Transverse colon (tissue), 4 donors: ENCODE measurements at regions of chr9 and their contacts with region 1.

Region 1: DNA sequence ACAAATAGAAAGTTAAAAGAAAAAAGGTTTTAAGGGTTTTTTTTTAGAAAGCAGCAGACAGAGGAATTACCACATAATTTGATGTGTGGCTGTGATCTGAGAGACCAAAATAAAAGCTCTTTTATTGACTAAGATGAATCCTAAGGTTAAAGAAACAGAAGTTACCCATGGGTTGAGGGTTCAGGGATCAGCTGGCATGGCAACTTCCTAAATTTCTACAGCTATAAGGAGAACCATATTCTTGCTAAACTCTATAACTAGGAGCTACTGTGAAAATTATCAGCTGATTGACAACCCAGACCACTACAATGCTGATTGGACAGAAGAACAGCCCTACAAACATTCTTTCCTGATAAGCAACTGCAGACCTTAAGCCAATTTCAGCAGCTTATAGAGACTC is 40.2 kb downstream of the TMEM215 start:
- DNase-seq: no peak
- H3K4me3 ChIP-seq: no peak overlapping the region
- H3K27ac ChIP-seq: no peak overlapping the region
- H3K4me1 ChIP-seq: no peaks in the 10 kb centered on the region
- H3K27me3 ChIP-seq: no peaks in the 10 kb centered on the region
- CTCF ChIP-seq: no peak
- EP300 ChIP-seq: no peak
- POLR2A ChIP-seq: no peak

Region 2: GRCh38 chr9:32881948-32882347 is 58.4 kb after region 1 on chr9:
- in situ Hi-C with region 1: loop called in 1 of 4 experiments (anchors 10 kb)
- intact Hi-C with region 1: no loop called
- DNase-seq: no peak
- H3K4me3 ChIP-seq: no peak overlapping the region
- H3K27ac ChIP-seq: no peak overlapping the region
- H3K4me1 ChIP-seq: no peaks in the 10 kb centered on the region
- H3K27me3 ChIP-seq: no peaks in the 10 kb centered on the region
- CTCF ChIP-seq: no peak
- EP300 ChIP-seq: no peak
- POLR2A ChIP-seq: no peak

Region 3: GRCh38 chr9:33125871-33126822 is 302.6 kb after region 1 on chr9:
- in situ Hi-C with region 1: no loop called
- intact Hi-C with region 1: no loop called
- DNase-seq: no peak
- H3K4me3 ChIP-seq: no peak overlapping the region
- H3K27ac ChIP-seq: no peak overlapping the region
- H3K4me1 ChIP-seq: peaks cover 18 to 41% (median 25%) of the 10 kb centered on the region in 4 donors
- H3K27me3 ChIP-seq: no peaks in the 10 kb centered on the region
- CTCF ChIP-seq: no peak
- EP300 ChIP-seq: no peak
- POLR2A ChIP-seq: no peak

Region 4: DNA sequence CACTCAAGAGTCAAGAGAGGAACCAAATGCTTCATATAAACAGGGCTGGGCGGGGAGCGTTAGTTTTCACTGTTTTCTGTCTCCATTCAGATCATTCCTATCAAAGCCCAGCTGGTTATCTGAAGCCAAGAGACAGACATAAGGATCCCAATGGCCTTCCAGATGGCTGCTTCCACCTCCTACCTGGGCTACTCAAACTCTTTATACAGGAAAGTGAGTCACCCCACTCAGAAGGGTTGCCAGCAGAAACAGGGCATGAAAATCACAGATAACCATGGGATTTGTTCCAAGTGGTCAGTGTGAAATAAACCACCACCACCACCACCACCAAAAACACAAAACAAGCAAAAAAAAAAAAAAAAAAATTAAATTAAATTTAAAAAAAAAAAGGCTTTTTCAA is 977.3 kb after region 1 on chr9:
- in situ Hi-C with region 1: no loop called
- intact Hi-C with region 1: no loop called
- DNase-seq: no peak
- H3K4me3 ChIP-seq: no peak overlapping the region
- H3K27ac ChIP-seq: no peak overlapping the region
- H3K4me1 ChIP-seq: no peaks in the 10 kb centered on the region
- H3K27me3 ChIP-seq: no peaks in the 10 kb centered on the region
- CTCF ChIP-seq: no peak
- EP300 ChIP-seq: no peak
- POLR2A ChIP-seq: no peak